Posterior cingulate gyrus (tissue), 11 donors: ENCODE measurements at regions of chr11 and their contacts with region 1.

Region 1: GRCh38 chr11:36041988-36042611 is 98.2 kb downstream of the LDLRAD3 start:
- DNase-seq: no peak

Region 2: GRCh38 chr11:35980686-35981390 is 61.3 kb before region 1 on chr11:
- intact Hi-C with region 1: no loop called
- DNase-seq: no peak

Region 3: GRCh38 chr11:36131721-36132397 is 89.8 kb after region 1 on chr11:
- intact Hi-C with region 1: loop called (anchors 2 kb)
- DNase-seq: peak in 9 of 10 donors; percentile 46 to 94 (median 66)

Region 4: GRCh38 chr11:36258730-36259360 is 216.7 kb after region 1 on chr11:
- intact Hi-C with region 1: loop called (anchors 2 kb)
- DNase-seq: peak; percentile 37 to 96 (median 64)